Heart right ventricle (tissue), 16 donors: ENCODE measurements at regions of chr10 and their contacts with region 1.

Region 1: GRCh38 chr10:79022565-79023230 is 46.1 kb upstream of the ZMIZ1 start:
- DNase-seq: peak; percentile 69 to 70
- ATAC-seq: peak in 7 of 8 donors; percentile 45 to 76 (median 71)
- H3K4me3 ChIP-seq: peak overlapping the region in 9 of 10 donors; percentile 3 to 42 (median 31)
- H3K27ac ChIP-seq: peak overlapping the region in 7 of 10 donors; percentile 18 to 88 (median 71)
- H3K4me1 ChIP-seq: peaks cover 4 to 55% (median 17%) of the 10 kb centered on the region in 9 donors
- H3K27me3 ChIP-seq: no peaks in the 10 kb centered on the region
- CTCF ChIP-seq: no peak

Region 2: GRCh38 chr10:77436257-77436975 is 1586.3 kb before region 1 on chr10:
- intact Hi-C with region 1: loop called in 1 of 10 experiments (anchors 5 kb)
- DNase-seq: no peak
- ATAC-seq: no peak
- H3K4me3 ChIP-seq: no peak overlapping the region
- H3K27ac ChIP-seq: no peak overlapping the region
- H3K4me1 ChIP-seq: no peaks in the 10 kb centered on the region
- H3K27me3 ChIP-seq: peaks cover 0 to 6% (median 0%) of the 10 kb centered on the region in 7 donors
- CTCF ChIP-seq: no peak